ENCODE measurements at regions of chr15 and their contacts with region 1.

Region 1: GRCh38 chr15:92521624-92522008 is 127.9 kb downstream of the ST8SIA2 start:
- DNase-seq: peak in 5 of 6 donors; percentile 60 to 87 (median 64)
- ATAC-seq: peak; percentile 95 to 100 (median 100)
- H3K4me3 ChIP-seq: no peak overlapping the region
- H3K27ac ChIP-seq: no peak overlapping the region
- H3K4me1 ChIP-seq: no peaks in the 10 kb centered on the region
- H3K27me3 ChIP-seq: no peaks in the 10 kb centered on the region
- CTCF ChIP-seq: peak; percentile 33 to 76 (median 62)

Region 2: GRCh38 chr15:92683232-92683834 is 161.7 kb after region 1 on chr15:
- intact Hi-C with region 1: loop called in 2 of 3 experiments (anchors 5 to 10 kb)
- DNase-seq: peak in 4 of 6 donors; percentile 25 to 74 (median 52)
- ATAC-seq: peak; percentile 74 to 92 (median 85)
- H3K4me3 ChIP-seq: no peak overlapping the region
- H3K27ac ChIP-seq: no peak overlapping the region
- H3K4me1 ChIP-seq: no peaks in the 10 kb centered on the region
- H3K27me3 ChIP-seq: no peaks in the 10 kb centered on the region
- CTCF ChIP-seq: peak; percentile 16 to 49 (median 28)

Region 3: GRCh38 chr15:92714477-92715401 is 193.1 kb after region 1 on chr15:
- intact Hi-C with region 1: loop called in 1 of 3 experiments (anchors 10 kb)
- DNase-seq: peak; percentile 45 to 85 (median 68)
- ATAC-seq: peak; percentile 90 to 98 (median 96)
- H3K4me3 ChIP-seq: peak overlapping the region; percentile 31 to 50 (median 47)
- H3K27ac ChIP-seq: peak overlapping the region in 3 of 4 donors; percentile 7 to 19 (median 18)
- H3K4me1 ChIP-seq: no peaks in the 10 kb centered on the region
- H3K27me3 ChIP-seq: no peaks in the 10 kb centered on the region
- CTCF ChIP-seq: peak; percentile 50 to 86 (median 62)

Measured in pancreas (tissue), 10 donors.